HepG2 (cell line): ENCODE measurements at regions of chr14 and their contacts with region 1.

Region 1: GRCh38 chr14:23588884-23589598 is 10.5 kb upstream of the JPH4 start:
- DNase-seq: peak; percentile 98
- ATAC-seq: peak; percentile 98
- H3K4me3 ChIP-seq: peak overlapping the region in 1 of 3 experiments; percentile 9; a peak in 2 of 6 replicates
- H3K27ac ChIP-seq: no peak overlapping the region
- H3K4me1 ChIP-seq: peaks cover 24% of the 10 kb centered on the region
- H3K27me3 ChIP-seq: no peaks in the 10 kb centered on the region
- CTCF ChIP-seq: peak; percentile 100
- EP300 ChIP-seq: peak; percentile 87 to 90
- POLR2A ChIP-seq: no peak
- RAD21 ChIP-seq: peak; percentile 100

Region 2: DNA sequence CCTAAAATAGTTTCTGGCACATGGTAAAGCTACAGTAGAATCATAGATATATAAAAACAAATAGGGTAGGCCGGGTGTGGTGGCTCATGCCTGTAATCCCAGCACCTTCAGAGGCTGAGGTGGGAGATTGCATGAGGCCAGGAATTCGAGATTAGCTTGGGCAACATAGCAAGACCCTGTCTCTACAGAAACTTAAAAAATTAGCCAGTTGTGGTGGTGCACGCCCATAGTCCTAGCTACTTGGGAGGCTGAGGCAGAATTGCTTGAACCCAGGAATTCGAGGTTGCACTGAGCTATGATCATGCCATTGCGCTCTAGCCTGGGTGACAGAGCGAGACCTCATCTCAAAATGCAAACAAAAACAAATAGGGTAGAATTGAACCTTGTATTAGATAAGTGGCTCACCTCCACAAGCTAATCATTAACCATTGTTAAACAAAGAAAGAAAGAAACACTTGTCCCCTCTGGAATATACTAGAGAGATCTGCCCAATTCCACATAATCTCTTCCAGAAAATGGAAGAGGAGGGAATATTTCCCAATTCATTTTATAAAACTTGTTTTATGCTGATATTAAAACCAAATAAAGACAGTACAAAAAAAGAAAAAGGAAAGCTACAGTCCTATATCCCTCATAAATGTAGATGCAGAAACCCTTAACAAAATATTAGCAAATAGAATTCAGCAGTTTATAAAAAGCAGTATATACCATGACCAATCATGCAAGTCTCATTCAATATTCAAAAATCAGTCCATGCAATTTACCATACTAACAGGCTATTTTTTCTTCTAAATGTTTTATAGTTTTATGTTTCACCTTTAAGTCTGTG is 24.4 kb after region 1 on chr14:
- CTCF ChIA-PET with region 1: interaction called, 19 read pairs
- POLR2A ChIA-PET with region 1: interaction called, 142 read pairs
- in situ Hi-C with region 1: no loop called
- intact Hi-C with region 1: loop called (anchors 1 kb)
- DNase-seq: peak; percentile 100
- ATAC-seq: peak; percentile 70
- H3K4me3 ChIP-seq: peak overlapping the region in 2 of 3 experiments; percentile 9 to 26; a peak in 3 of 6 replicates
- H3K27ac ChIP-seq: peak overlapping the region; percentile 89
- H3K4me1 ChIP-seq: peaks cover 95% of the 10 kb centered on the region
- H3K27me3 ChIP-seq: no peaks in the 10 kb centered on the region
- CTCF ChIP-seq: no peak; the same call in 1 of the 2 replicates
- EP300 ChIP-seq: peak; percentile 46 to 95; a peak in 2 of 4 replicates
- POLR2A ChIP-seq: 0 out of 4 replicates have a peak, but pooled peaks have one; percentile 26 to 40
- RAD21 ChIP-seq: no peak; the same call in 1 of the 2 replicates

Region 3: DNA sequence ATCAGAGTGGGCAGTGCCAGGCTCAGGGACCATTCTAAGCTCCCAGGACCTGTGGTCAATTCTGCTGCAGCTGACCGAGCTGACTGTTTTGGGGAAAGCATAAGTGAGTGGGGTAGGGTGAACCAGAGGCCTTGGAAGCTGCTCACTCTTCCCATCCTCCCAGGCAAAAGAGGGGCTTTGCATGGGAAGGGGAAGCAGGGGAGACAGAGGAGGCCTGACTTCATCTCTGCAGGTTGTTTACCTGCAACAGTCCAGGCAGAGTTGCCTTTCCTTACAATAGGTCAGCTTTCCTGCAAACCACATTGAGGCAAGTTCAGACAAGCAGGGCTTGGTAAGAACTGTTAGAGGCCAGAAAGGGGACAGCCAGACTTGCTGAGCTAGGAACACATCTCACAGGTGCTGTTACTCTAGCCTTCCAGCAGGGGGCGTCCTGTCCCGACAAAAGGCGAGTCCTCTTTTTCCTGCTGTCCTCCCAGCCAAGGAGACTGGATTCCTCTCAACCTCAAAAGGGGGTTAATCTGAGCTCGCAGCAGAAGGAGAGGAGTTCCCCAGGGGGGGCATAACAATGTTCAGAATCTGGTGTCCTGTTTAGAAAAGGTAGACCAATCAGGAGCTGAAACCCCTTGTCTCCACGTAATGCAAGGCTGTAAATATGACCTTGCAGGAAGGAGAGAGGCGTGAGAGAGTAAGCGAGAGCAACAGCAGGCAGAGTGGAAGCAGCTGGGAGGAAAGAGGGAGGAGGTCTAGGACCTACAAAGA is 42.8 kb after region 1 on chr14:
- CTCF ChIA-PET with region 1: interaction called, 207 read pairs
- POLR2A ChIA-PET with region 1: interaction called, 924 read pairs
- in situ Hi-C with region 1: loop called (anchors 5 kb)
- intact Hi-C with region 1: loop called (anchors 1 kb)
- DNase-seq: peak; percentile 96
- ATAC-seq: peak; percentile 28
- H3K4me3 ChIP-seq: peak overlapping the region; percentile 35 to 59 (median 41)
- H3K27ac ChIP-seq: peak overlapping the region; percentile 48
- H3K4me1 ChIP-seq: peaks cover 68% of the 10 kb centered on the region
- H3K27me3 ChIP-seq: no peaks in the 10 kb centered on the region; a peak in 1 of 5 replicates
- CTCF ChIP-seq: no peak
- EP300 ChIP-seq: peak; percentile 9 to 39; a peak in 1 of 4 replicates
- POLR2A ChIP-seq: no peak
- RAD21 ChIP-seq: peak; percentile 93

Region 4: GRCh38 chr14:23665375-23666192 is 76.5 kb after region 1 on chr14:
- CTCF ChIA-PET with region 1: interaction called, 9 read pairs
- POLR2A ChIA-PET with region 1: interaction called, 4 read pairs
- in situ Hi-C with region 1: no loop called
- intact Hi-C with region 1: loop called (anchors 1 kb)
- DNase-seq: peak; percentile 85
- ATAC-seq: peak; percentile 87
- H3K4me3 ChIP-seq: no peak overlapping the region
- H3K27ac ChIP-seq: no peak overlapping the region
- H3K4me1 ChIP-seq: peaks cover 17% of the 10 kb centered on the region
- H3K27me3 ChIP-seq: peaks cover 2 to 11% of the 10 kb centered on the region in 2 experiments; a peak in 3 of 5 replicates
- CTCF ChIP-seq: peak; percentile 92
- EP300 ChIP-seq: no peak
- POLR2A ChIP-seq: no peak
- RAD21 ChIP-seq: peak; percentile 89

Region 5: DNA sequence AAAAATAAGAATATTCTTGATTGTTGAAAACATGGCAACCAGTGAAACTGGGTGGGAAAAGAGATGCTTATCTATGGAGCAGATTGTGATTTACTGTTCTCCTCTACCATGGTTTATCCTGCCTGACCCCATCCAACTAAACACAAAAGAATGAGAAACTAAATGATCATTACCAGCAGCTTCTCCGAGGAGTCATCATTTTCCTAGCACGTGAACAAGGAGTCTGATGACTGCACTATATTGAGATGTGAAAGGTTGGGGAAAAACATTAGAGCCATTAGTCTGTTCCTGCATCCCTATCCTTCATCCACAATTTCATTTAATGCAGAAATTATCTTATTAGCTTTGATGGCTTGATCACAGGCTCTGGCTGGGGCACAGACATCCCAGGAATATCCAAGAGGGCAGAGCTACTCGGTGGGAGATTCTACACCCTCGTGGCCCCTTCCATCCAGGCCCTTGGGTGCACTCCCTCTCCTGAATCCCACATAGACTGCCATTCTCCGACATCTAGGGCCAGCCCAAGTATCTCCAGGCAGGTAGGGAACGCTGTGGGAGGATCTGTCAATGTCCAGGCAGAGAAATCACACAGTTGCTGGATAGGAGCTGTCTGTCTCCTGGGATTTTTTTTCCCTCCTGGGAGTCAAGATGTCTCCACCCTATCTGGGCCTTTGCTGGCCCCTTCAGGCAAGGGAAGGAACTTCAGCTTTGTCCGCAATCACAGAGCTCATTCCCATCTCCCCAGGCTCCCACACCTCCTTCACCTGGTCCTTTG is 321.2 kb after region 1 on chr14:
- CTCF ChIA-PET with region 1: interaction called, 26 read pairs
- POLR2A ChIA-PET with region 1: interaction called, 15 read pairs
- in situ Hi-C with region 1: loop called (anchors 5 kb)
- intact Hi-C with region 1: loop called (anchors 1 kb)
- DNase-seq: peak; percentile 81
- ATAC-seq: peak; percentile 96
- H3K4me3 ChIP-seq: no peak overlapping the region
- H3K27ac ChIP-seq: no peak overlapping the region
- H3K4me1 ChIP-seq: no peaks in the 10 kb centered on the region
- H3K27me3 ChIP-seq: peaks cover 0 to 2% of the 10 kb centered on the region in 2 experiments; a peak in 1 of 5 replicates
- CTCF ChIP-seq: peak; percentile 98
- EP300 ChIP-seq: no peak
- POLR2A ChIP-seq: no peak
- RAD21 ChIP-seq: peak; percentile 97

Region 6: DNA sequence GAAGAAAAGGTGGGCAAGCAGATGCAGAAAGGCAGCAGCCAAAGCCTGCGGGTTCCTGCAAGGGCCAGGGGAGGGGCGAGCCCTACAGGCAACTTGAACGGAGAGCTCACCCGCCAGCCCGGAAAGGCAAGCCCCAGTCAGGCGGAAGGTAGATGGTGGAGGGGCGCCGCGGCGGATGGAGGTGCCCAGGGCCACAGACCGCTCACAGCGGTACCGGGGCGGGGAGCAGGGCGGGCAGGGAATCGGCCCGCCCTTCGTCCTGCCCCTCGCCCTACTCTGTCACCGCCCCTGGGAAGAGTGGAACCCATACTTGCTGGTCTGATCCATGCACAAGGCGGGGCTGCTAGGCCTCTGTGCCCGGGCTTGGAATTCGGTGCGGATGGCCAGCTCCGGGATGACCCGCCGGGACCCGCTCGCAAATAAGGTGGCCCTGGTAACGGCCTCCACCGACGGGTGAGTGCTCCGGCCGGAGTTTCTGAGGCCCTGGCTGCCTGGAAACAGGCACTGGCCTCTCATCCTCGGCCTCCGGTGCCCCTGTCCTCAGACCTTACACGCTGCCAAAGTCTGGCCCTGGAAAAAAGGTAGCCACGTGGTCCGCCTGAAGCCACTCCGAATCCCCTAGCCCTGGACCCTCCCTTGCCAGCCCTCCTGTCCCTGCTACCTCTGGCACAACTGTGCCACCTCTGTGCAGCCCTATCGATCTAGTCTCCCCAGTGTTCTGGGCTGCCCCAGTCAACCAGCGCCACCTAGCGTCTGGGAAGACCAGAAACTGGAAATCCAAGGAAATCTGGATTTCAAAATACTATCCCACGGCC is 364.6 kb after region 1 on chr14 and contains the start of gene DHRS4:
- CTCF ChIA-PET with region 1: interaction called, 6 read pairs
- POLR2A ChIA-PET with region 1: no interaction called
- in situ Hi-C with region 1: no loop called
- intact Hi-C with region 1: loop called (anchors 1 kb)
- DNase-seq: peak; percentile 94
- ATAC-seq: peak; percentile 98
- H3K4me3 ChIP-seq: peak within 1 kb of the TSS; percentile 73 to 90 (median 85)
- H3K27ac ChIP-seq: peak within 1 kb of the TSS; percentile 74
- H3K4me1 ChIP-seq: peaks cover 27% of the 10 kb centered on the region
- H3K27me3 ChIP-seq: no peaks in the 10 kb centered on the region
- CTCF ChIP-seq: peak; percentile 100
- EP300 ChIP-seq: peak; percentile 6 to 60; a peak in 3 of 4 replicates
- POLR2A ChIP-seq: peak; percentile 97 to 99
- RAD21 ChIP-seq: peak; percentile 93
- total RNA-seq, gene DHRS4: 45.1 and 49.4 TPM in 2 replicates